K562 (cell line): ENCODE measurements at regions of chr13 and their contacts with region 1.

Region 1: DNA sequence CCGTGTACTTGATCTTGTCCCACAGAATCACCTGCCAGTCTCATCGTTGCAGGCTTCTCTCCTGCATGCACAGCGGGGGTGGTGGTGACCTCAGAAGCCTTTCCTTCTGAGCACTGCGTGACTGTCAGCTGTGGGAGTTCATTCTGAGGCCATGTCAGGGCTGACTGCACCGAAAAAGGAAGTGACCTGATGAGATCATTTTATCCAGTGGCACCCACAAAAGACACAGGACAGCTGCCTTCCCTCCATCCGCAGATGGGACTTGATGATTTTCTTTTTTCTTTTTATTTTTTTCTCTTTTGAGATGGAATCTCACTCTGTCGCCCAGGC is 89.7 kb downstream of the RAB20 start:
- DNase-seq: peak; percentile 54 to 75 (median 61)
- ATAC-seq: peak; percentile 84
- H3K4me3 ChIP-seq: no peak overlapping the region
- H3K27ac ChIP-seq: no peak overlapping the region
- H3K4me1 ChIP-seq: peaks cover 30 to 42% of the 10 kb centered on the region in 2 experiments
- H3K27me3 ChIP-seq: peaks cover 0 to 8% of the 10 kb centered on the region in 2 experiments; a peak in 2 of 5 replicates
- CTCF ChIP-seq: no peak
- EP300 ChIP-seq: peak; percentile 65
- POLR2A ChIP-seq: no peak
- RAD21 ChIP-seq: no peak

Region 2: DNA sequence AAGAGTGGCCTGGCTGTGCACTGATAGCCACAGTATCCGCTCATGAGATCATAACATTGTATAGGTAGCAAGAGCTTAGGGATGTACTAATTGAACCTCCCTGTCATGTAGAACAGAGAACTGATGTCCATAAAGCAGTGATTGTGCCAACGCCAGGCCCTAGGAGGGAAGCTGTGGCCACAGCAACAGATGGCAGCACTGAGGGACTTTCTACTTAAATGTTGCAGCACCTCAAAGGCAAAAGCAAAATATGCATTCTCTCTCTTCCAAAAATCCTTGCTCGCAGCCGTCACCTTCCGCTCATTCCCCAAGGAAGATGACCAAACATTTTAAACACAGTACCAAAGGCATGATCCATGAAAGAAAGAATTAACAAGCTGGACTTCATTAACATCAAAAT is 197.1 kb before region 1 on chr13:
- CTCF ChIA-PET with region 1: no interaction called
- POLR2A ChIA-PET with region 1: no interaction called
- in situ Hi-C with region 1: no loop called
- intact Hi-C with region 1: no loop called
- DNase-seq: no peak
- ATAC-seq: no peak
- H3K4me3 ChIP-seq: no peak overlapping the region
- H3K27ac ChIP-seq: no peak overlapping the region
- H3K4me1 ChIP-seq: no peaks in the 10 kb centered on the region
- H3K27me3 ChIP-seq: peaks cover 3 to 14% of the 10 kb centered on the region in 2 experiments; a peak in 4 of 5 replicates
- CTCF ChIP-seq: no peak
- EP300 ChIP-seq: no peak
- POLR2A ChIP-seq: no peak
- RAD21 ChIP-seq: no peak

Region 3: GRCh38 chr13:110503979-110504499 is 32.2 kb after region 1 on chr13:
- CTCF ChIA-PET with region 1: no interaction called
- POLR2A ChIA-PET with region 1: no interaction called
- in situ Hi-C with region 1: no loop called
- intact Hi-C with region 1: loop called (anchors 2 kb)
- DNase-seq: peak; percentile 44 to 60 (median 56)
- ATAC-seq: peak; percentile 59
- H3K4me3 ChIP-seq: peak overlapping the region; percentile 18
- H3K27ac ChIP-seq: peak overlapping the region; percentile 83
- H3K4me1 ChIP-seq: peaks cover 51 to 55% of the 10 kb centered on the region in 2 experiments
- H3K27me3 ChIP-seq: no peaks in the 10 kb centered on the region
- CTCF ChIP-seq: no peak
- EP300 ChIP-seq: no peak
- POLR2A ChIP-seq: no peak
- RAD21 ChIP-seq: no peak